Aorta (tissue), 5 donors: ENCODE measurements at regions of chr20 and their contacts with region 1.

Region 1: DNA sequence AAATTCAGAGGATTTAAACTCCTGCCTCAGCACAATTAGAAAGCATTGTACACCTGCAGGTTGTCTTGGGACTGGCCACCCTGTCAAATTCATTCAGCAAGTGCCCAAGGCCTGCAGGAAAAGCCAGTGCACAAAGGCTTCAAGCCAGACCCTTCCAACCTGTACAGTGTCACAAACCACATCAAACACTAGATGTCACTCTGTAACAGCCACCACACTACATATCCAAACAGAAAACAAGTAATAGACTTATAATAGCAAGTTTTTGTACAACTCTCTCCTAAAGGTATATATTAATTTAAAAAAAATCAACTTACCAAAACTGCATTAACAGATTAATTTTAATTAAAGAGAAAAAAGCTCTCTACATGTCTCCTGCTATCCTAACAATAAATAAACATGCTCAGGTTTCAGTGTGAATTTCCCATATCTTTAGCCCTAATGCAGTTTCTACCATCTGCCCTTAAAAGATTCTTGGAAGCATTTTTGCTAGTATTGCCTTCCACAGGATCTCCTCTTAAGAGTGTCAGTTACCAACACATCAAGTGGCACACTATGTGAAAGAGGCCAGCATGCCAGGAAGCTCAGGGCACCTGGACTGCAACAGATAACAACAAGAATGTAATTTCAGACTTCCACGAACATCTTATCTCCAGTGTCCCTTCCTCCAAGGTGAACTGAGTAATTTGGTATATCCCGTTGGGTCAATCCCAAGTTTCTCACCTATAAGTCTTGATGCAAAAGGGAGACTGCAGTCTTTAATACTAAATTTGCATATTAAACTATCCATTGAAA is 47.5 kb downstream of the RALGAPA2 start:
- DNase-seq: no peak
- ATAC-seq: peak; percentile 57
- H3K4me3 ChIP-seq: no peak overlapping the region
- H3K27ac ChIP-seq: no peak overlapping the region
- H3K4me1 ChIP-seq: no peaks in the 10 kb centered on the region
- H3K27me3 ChIP-seq: no peaks in the 10 kb centered on the region

Region 2: DNA sequence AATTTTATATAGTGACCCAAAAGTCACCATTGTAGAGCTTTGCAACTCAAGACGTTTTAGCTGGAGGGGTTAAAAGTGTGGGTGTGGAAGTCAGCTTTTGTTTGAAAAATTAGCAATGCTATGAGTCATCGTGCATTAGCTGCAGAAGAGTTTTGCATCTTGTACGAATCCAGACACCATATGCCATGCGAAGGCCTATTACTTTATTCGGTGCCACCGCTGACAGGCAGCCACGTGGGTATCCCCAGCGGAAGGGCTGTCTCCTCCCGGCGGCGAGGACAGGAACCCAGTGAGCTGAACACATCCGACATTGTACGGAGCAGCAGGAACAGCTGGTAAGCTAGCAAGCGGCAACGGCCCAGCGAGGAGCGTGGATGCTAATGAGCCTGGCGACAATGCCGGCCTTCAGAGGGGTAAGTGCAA is 212.7 kb before region 1 on chr20:
- intact Hi-C with region 1: no loop called
- DNase-seq: peak; percentile 75 to 77
- ATAC-seq: peak; percentile 66
- H3K4me3 ChIP-seq: no peak overlapping the region
- H3K27ac ChIP-seq: no peak overlapping the region
- H3K4me1 ChIP-seq: no peaks in the 10 kb centered on the region
- H3K27me3 ChIP-seq: no peaks in the 10 kb centered on the region

Region 3: DNA sequence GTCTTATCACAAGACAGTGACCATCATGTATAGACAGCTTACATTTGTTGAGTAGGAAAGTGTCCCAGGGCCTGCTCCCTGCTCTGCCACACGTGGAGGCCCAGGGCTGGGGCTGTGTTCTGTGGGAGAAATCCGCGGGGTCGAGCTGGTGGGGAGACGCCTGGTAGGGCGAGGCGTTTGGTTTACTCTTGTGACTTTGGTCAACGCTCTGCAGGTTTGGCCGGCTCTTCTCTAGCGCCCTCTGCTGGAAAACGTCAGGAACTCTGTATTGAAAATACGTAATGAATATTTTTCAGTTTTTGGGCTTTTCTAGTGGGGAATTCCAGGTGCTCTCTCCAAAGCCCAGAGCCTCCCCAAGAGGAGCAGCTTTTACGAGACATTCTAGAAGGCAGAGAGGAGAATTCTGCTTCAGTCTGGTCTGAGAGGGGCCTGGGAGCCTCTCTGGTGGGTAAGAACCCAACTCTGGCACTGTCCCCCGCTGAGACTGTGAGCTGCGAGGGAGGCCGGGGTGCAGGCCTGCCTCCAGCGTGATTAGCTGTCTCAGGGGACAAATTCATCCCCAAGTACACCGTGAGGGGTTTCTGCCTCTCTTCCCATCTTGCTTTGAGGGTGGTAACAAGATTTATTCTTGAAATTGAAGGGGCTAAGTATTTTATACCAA is 160.1 kb after region 1 on chr20:
- intact Hi-C with region 1: loop called in 1 of 2 experiments (anchors 2 kb)
- DNase-seq: peak; percentile 72 to 86
- ATAC-seq: peak; percentile 75
- H3K4me3 ChIP-seq: no peak overlapping the region
- H3K27ac ChIP-seq: no peak overlapping the region
- H3K4me1 ChIP-seq: no peaks in the 10 kb centered on the region
- H3K27me3 ChIP-seq: peaks cover 0 to 2% of the 10 kb centered on the region in 2 donors